AG04449 (cell line): ENCODE measurements at regions of chr19 and their contacts with region 1.

Region 1: GRCh38 chr19:45178262-45179071 is at the start of gene BLOC1S3:
- DNase-seq: peak; percentile 100
- H3K4me3 ChIP-seq: peak within 1 kb of the TSS; percentile 90
- CTCF ChIP-seq: peak; percentile 65

Region 2: DNA sequence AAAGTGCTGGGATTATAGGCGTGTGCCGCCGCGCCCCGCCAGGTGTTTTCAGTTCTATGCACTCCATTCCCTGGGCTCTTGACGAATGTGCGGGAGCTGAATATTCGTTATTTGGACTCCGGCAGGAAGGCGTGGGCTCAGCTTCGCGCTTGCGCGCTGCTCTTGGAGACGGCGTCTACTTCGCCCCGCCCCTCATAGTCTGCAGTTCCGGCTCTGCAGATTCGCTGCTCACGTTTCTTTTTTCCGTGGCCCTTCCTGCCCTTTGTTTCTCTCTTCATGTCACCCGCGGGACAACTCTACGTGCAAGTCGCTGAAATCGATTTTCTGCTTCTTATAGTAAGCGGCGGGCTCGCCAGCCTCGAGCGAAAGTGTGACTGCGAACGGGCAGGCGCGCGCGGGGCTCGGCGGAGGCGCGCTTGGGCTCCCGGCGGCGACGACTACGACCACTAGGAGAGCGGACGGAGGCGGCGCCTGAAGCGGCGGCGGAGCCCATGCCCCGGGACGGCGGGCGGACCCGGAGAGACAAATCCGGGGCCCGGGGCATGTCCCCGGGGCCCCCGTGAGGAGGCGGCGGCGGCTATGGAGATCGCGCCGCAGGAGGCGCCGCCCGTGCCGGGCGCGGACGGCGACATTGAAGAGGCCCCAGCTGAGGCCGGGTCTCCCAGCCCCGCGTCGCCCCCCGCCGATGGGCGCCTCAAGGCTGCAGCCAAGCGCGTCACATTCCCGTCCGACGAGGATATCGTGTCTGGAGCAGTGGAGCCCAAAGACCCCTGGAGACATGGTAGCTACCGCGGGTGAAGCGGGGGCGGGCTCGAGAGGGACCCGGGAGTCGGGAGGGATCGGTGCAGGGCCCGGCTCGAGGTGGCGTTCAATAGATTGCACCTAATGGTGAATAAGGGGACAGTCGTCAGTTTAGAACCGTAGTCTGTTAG is 85.5 kb before region 1 on chr19 and contains the start of gene PPP1R37:
- CTCF ChIA-PET with region 1: interaction called, 3 read pairs
- POLR2A ChIA-PET with region 1: interaction called, 16 read pairs
- DNase-seq: peak; percentile 69
- H3K4me3 ChIP-seq: peak within 1 kb of the TSS; percentile 92
- CTCF ChIP-seq: peak; percentile 53

Region 3: DNA sequence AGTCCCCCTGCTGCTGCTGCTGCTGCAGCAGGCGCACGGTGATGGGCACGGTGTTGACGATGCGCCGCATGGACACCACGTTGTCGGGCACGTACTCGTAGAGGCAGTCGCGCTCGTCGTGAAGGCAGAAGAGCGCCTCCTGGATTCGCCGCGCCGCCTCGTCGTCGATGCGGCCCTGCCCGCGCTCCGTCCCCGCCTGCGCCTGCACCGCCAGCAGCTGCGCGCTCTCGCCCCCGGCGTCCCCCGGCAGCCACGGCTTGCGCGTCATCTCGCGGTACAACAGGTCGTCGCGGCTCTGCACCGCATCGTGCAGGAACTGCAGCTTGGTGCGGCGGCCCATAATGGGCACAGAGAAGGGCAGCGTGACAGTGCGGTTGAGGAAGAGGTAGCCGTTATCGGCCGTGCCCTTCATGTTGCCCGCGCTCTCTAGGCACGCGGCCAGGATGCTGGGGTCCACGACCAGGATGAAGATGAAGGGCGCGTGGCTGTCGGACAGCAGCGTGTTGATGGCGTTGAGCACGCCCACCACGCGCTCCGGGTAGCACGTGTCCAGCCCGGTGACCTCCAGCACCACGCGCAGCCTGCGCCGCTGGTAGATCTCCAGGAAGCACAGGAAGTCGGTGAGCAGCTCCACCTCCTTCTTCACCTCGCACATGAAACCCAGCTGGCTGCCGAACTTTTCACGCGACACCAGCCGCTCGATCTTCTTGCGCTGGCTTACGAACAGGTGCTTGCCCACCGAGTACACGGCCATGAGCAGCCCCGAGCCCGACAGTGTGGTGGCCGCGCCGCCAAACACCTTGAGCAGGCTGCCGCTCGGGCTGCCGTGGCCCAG is 25.7 kb before region 1 on chr19:
- CTCF ChIA-PET with region 1: interaction called, 5 read pairs
- POLR2A ChIA-PET with region 1: interaction called, 10 read pairs
- DNase-seq: no peak
- H3K4me3 ChIP-seq: peak overlapping the region; percentile 41
- CTCF ChIP-seq: no peak

Region 4: DNA sequence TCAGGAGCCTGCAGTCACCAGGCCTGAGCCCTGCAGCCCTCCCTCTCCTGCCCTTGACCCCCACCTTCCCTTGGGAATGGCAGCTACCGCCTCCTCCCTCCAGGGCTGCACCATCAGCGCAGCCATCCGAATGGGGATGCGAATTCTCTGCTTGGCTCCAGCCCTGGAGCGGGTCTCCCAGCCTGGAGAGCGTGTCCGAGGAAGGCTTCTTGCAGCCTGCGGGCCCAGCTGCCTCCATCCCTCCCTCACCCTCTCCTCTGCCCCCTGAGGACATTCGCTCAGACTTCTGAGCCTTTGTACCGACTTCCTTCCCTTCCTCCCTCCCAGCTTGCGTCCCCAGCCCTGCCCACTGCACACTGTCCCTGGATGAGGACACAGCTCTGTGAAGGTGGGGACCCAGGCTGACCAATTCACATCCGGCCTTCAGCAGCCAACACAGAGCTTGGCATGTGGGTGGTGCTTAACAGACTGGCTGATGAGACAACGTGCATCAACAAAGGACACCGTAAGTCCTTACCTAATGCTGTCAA is 11.7 kb before region 1 on chr19:
- CTCF ChIA-PET with region 1: interaction called, 12 read pairs
- POLR2A ChIA-PET with region 1: interaction called, 3 read pairs
- DNase-seq: no peak
- H3K4me3 ChIP-seq: no peak overlapping the region
- CTCF ChIP-seq: no peak